Heart left ventricle (tissue), 16 donors: ENCODE measurements at regions of chr21 and their contacts with region 1.

Region 1: DNA sequence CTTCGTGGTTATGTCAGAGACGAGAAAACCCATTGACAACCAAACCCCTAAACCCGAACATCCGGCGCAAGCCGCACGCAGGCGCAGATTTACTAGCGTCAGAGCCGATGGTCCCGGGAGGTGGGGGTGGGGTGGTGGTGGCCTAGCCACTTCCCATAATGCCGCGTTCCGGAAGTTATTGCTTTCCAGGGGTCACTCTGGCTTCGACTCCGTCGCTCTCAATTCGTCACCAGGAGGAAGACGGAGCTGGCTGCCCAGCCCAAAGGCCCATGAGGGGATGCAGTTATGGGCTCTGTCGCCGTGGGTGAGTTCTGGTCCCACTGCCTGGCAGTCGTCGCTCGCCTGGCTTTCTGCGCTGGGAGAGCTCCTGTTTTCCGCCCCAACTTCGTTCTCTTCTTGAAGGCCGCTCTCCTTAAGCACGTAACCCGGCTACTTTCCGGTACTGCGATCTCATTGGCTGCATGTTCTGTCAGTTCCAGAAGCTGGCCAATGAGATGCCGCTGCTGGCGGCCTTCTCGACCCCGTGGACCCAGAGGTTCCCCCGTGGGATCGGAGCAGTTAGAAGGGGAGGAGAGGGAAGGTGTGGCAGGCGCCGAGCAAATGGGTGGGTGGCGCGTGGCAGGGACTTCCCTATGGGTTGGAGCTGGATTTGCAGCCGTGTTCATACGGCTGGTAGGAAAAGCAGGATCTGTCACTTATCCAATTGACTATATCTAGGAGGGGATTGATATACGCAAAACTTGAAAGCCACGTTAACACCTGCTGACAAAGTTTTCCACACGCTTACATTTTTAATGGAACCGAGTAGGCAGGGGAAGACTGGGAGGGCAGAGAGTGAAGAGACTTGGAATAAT is at the start of gene USP16:
- DNase-seq: peak; percentile 95 to 98 (median 97)
- ATAC-seq: peak; percentile 98 to 99 (median 98)
- H3K4me3 ChIP-seq: peak within 1 kb of the TSS; percentile 30 to 95 (median 72)
- H3K27ac ChIP-seq: peak within 1 kb of the TSS; percentile 87 to 100 (median 98)
- H3K4me1 ChIP-seq: peaks cover 0 to 38% (median 20%) of the 10 kb centered on the region in 12 donors
- H3K27me3 ChIP-seq: no peaks in the 10 kb centered on the region
- CTCF ChIP-seq: peak in 2 of 12 donors; percentile 29 to 35
- POLR2A ChIP-seq: peak in 1 of 2 donors; percentile 40
- total RNA-seq, gene USP16: 19.1 to 38.1 (median 32.4) TPM

Region 2: DNA sequence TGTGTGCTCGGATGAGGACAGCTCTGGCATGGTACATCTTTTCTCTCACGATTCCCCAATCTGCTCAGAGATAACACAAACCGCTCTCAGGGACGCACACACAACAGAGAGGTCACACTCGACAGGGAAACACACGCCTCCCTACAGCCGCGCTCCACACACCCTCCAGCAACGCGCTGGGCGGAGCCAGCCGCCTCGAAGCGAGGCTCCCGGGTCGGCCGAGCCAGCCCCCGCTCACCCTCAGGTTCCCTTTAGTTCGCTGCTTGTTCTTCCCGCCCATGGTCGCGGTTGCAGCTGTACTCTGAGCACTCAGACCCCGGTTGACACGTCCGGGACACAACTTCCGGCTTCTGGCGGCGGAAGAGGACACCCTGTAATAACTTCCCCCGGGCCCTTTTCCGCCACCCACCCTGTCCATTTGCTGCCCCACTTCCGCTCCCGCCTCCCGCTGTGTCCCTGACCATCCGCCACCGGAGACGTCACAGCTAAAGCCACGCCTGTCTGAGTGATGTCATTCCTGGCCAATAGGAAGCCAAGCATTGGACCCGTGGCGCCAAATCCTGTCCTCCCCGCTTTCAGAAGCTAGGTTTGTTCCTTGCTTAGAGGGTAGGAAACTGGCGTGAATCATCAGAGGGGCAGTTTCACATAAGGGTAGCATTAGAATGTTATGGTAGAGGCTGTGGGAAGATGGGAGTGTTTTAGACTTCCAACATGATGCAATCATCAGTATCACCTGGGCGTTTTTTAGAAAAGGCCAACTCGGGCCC is 32.0 kb before region 1 on chr21 and contains the start of gene LTN1:
- intact Hi-C with region 1: loop called in 3 of 10 experiments (anchors 2 to 5 kb)
- DNase-seq: peak; percentile 99 to 100 (median 99)
- ATAC-seq: peak; percentile 100
- H3K4me3 ChIP-seq: peak within 1 kb of the TSS; percentile 64 to 100 (median 88)
- H3K27ac ChIP-seq: peak within 1 kb of the TSS; percentile 57 to 95 (median 89)
- H3K4me1 ChIP-seq: peaks cover 0 to 28% (median 20%) of the 10 kb centered on the region in 12 donors
- H3K27me3 ChIP-seq: no peaks in the 10 kb centered on the region
- CTCF ChIP-seq: no peak
- POLR2A ChIP-seq: peak; percentile 14 to 68
- total RNA-seq, gene LTN1: 11.1 to 20.3 (median 18.6) TPM

Region 3: DNA sequence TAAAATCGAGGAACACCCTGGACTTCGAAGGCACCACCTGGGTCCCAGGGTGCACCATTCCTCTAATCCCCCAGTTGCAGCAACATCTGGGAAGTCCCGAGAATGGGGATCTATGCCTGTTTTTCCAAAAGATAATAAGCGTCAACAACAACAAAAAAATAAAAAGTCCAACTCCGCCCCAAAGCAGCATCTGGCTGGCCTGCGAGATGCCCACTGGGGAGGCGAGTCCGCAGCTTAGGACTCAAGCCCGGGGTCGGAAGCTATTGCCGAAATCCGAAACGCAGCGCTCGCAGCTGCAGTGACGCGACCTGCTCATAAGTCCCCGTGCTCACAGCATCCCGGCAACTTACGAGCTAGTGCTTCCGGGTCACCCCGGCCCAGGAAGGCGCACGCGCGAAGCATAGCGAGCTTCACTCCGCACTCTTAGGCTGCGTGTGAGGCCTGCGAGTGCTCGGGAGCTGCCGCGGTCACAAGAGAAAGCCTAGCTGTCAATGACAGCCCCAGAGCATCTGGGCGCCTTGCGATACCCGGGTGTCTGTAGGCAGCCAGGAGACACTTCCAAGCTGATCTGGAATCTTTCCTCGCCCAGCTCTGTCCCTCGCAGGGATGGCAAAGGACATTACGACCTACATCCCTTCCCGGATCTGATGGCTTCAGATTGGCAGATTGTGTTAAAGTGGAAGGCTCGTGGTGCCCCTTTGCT is 22.1 kb before region 1 on chr21:
- intact Hi-C with region 1: loop called in 2 of 10 experiments (anchors 2 kb)
- DNase-seq: peak; percentile 96 to 97 (median 97)
- ATAC-seq: peak; percentile 100
- H3K4me3 ChIP-seq: peak overlapping the region; percentile 38 to 78 (median 67)
- H3K27ac ChIP-seq: peak overlapping the region; percentile 83 to 97 (median 94)
- H3K4me1 ChIP-seq: peaks cover 0 to 17% (median 7%) of the 10 kb centered on the region in 12 donors
- H3K27me3 ChIP-seq: no peaks in the 10 kb centered on the region
- CTCF ChIP-seq: no peak
- POLR2A ChIP-seq: peak in 1 of 2 donors; percentile 88

Region 4: DNA sequence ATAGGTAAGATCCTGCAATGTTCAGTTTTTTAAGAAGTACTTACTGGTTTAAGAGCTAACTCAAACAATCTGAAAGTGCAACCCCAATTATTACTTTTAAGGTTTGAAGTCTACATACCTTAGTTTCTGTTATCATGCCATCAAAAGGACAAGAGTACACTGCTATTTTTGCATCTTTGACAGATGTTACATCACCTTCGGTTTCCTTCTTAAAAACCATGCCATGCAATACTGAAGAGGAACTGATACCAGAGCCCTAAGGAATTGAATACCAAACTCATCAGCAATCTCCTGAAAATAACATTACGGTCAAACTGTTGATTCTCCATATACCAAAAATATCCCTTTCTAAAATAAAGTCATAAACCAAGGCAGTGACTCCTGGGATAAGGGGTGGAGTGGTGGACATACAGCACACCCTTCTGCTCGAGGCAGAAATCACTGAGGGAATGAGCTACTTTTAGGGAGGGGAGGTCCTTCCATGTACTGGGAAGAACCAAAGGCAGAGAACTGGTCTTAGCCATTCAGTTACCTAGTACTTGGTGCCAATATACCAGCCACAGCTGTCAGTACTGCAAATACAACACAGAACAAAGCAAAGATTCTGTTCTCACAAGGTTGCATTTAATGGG is 40.3 kb after region 1 on chr21:
- intact Hi-C with region 1: loop called in 3 of 10 experiments (anchors 5 kb)
- DNase-seq: no peak
- ATAC-seq: peak in 3 of 4 donors; percentile 28 to 58 (median 52)
- H3K4me3 ChIP-seq: no peak overlapping the region
- H3K27ac ChIP-seq: peak overlapping the region in 1 of 12 donors; percentile 25
- H3K4me1 ChIP-seq: peaks cover 0 to 14% (median 0%) of the 10 kb centered on the region in 12 donors
- H3K27me3 ChIP-seq: no peaks in the 10 kb centered on the region
- CTCF ChIP-seq: no peak
- POLR2A ChIP-seq: no peak

Region 5: GRCh38 chr21:29073222-29074006 is 48.7 kb after region 1 on chr21 and contains the start of gene CCT8:
- intact Hi-C with region 1: loop called in 3 of 10 experiments (anchors 2 to 5 kb)
- DNase-seq: peak; percentile 99 to 100 (median 100)
- ATAC-seq: peak; percentile 97 to 99 (median 98)
- H3K4me3 ChIP-seq: peak within 1 kb of the TSS; percentile 38 to 99 (median 86)
- H3K27ac ChIP-seq: peak within 1 kb of the TSS; percentile 84 to 95 (median 90)
- H3K4me1 ChIP-seq: peaks cover 6 to 49% (median 25%) of the 10 kb centered on the region in 12 donors
- H3K27me3 ChIP-seq: no peaks in the 10 kb centered on the region
- CTCF ChIP-seq: no peak
- POLR2A ChIP-seq: peak in 1 of 2 donors; percentile 86
- total RNA-seq, gene CCT8: 88.8 to 147 (median 110) TPM

Region 6: DNA sequence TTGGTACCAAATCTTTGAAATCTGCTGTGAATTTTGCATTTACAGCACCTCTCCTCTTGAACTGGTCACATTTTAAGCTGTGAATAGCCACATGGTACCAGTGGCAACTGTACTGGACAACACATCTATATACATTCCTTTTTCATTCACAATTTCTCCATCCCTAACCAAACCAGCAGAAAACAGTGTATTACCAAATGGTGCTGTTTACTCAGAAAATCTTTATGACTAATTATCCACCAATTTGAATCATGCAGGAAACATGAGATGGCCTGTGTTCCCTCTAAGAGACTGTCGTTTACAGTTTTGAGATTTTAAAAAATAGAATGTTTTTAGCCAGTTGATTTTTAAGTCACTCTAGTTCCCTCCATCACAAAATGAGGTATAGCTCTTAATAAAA is 66.3 kb after region 1 on chr21:
- intact Hi-C with region 1: no loop called
- DNase-seq: no peak
- ATAC-seq: no peak
- H3K4me3 ChIP-seq: no peak overlapping the region
- H3K27ac ChIP-seq: peak overlapping the region in 1 of 12 donors; percentile 0
- H3K4me1 ChIP-seq: peaks cover 0 to 11% (median 0%) of the 10 kb centered on the region in 12 donors
- H3K27me3 ChIP-seq: no peaks in the 10 kb centered on the region
- CTCF ChIP-seq: no peak
- POLR2A ChIP-seq: no peak